Activated CD4-positive, alpha-beta T cell treated with anti-CD3 and anti-CD28 coated beads, Interleukin-2, amount 10 ng/mL, durations not matched to agents 7 days and 5 days (primary cell): ENCODE measurements at regions of chr6 and their contacts with region 1.

Region 1: GRCh38 chr6:2634139-2634964 is 116.4 kb downstream of the MYLK4 start:
- DNase-seq: peak; percentile 82
- H3K4me3 Mint-ChIP-seq: peak overlapping the region; percentile 63
- H3K27ac Mint-ChIP-seq: no peak overlapping the region
- H3K4me1 Mint-ChIP-seq: peaks cover 3% of the 10 kb centered on the region
- H3K27me3 Mint-ChIP-seq: peaks cover 8% of the 10 kb centered on the region

Region 2: DNA sequence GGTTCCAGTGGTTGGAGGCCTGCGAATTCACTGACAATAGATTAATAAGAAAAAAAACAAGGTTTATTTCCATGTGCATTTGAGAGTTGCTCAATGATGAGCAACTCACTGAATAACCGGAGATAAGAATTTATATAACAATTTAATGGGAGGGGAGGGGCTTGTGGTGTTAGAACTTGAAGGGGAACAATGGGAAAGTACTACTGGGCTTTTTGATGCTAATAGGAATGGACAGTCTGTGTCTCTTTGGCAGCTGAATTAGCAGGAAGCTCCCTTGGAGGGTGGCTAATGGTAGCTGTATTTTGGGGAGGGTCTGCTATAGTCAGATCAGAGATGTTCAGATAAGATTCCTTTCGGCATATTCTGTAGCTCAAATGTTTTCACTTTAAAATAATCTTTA is 326.6 kb before region 1 on chr6:
- CTCF ChIA-PET with region 1: no interaction called
- POLR2A ChIA-PET with region 1: no interaction called
- DNase-seq: no peak
- H3K4me3 Mint-ChIP-seq: no peak overlapping the region
- H3K27ac Mint-ChIP-seq: no peak overlapping the region
- H3K4me1 Mint-ChIP-seq: no peaks in the 10 kb centered on the region
- H3K27me3 Mint-ChIP-seq: no peaks in the 10 kb centered on the region

Region 3: GRCh38 chr6:2517855-2518473 is 116.4 kb before region 1 on chr6:
- CTCF ChIA-PET with region 1: no interaction called
- POLR2A ChIA-PET with region 1: no interaction called
- DNase-seq: no peak
- H3K4me3 Mint-ChIP-seq: no peak overlapping the region
- H3K27ac Mint-ChIP-seq: no peak overlapping the region
- H3K4me1 Mint-ChIP-seq: peaks cover 10% of the 10 kb centered on the region
- H3K27me3 Mint-ChIP-seq: peaks cover 15% of the 10 kb centered on the region

Region 4: DNA sequence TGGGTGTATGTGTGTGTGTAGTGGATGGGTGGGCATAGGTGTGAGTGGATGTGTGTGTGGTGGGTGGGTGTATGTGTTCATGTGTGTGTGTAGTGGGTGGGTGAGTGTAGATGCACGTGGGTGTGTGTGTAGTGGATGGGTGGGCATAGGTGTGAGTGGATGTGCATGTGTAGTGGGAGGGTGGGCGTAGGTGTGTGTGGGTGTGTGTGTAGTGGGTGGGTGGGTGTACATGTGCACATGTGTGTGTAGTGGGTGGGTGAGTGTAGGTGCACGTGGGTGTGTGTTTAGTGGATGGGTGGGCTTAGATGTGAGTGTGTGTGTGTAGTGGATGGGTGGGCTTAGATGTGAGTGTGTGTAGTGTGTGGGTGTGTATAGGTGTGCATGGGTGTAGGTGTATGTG is 12.0 kb after region 1 on chr6:
- CTCF ChIA-PET with region 1: interaction called, 15 read pairs
- POLR2A ChIA-PET with region 1: interaction called, 3 read pairs
- DNase-seq: no peak
- H3K4me3 Mint-ChIP-seq: no peak overlapping the region
- H3K27ac Mint-ChIP-seq: no peak overlapping the region
- H3K4me1 Mint-ChIP-seq: peaks cover under 1% of the 10 kb centered on the region
- H3K27me3 Mint-ChIP-seq: peaks cover 52% of the 10 kb centered on the region